ENCODE measurements at regions of chr19 and their contacts with region 1.

Region 1: DNA sequence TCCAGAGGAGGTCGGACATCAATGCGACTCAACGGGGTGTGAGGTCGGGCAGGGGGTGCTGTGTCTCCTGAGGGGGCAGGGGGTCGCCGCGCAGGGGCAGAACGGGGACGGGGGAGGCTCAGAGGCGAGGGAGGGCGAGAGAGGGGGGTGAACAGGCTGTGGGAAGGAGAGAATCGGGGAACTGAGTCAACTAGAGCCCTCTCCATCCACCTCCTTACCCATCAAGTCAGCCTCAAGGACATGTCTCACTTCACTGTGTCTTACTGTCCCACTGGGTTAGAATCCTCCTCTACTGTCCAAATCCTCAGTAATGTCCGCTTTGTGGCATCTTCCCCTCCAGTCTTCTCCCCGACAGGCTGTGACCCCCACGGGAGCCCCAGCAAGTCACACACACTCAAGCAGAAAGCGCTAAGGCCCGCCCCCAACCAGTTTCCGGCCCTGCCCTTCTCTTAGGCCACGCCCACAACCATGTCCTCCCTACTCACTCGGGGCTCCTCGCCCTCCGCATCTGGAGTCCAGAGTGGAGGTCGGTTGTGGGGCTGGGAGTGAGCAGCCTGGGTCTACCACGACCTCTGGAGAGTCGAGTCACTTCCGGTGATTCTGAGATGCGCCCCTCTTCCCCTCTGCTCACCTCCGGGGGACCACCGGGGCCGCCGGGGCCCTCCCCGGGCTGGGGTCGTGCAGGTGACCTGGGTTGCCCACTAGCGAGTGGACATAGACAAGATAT is 9.3 kb downstream of the PLEKHA4 start:
- DNase-seq: peak in 8 of 9 experiments; percentile 74 to 84 (median 82)
- ATAC-seq: peak; percentile 76
- H3K4me3 ChIP-seq: peak overlapping the region; percentile 49 to 55
- H3K4me3 Mint-ChIP-seq: peak overlapping the region; percentile 88
- H3K27ac ChIP-seq: no peak overlapping the region
- H3K27ac Mint-ChIP-seq: peak overlapping the region; percentile 87
- H3K4me1 ChIP-seq: no peaks in the 10 kb centered on the region
- H3K4me1 Mint-ChIP-seq: peaks cover 3% of the 10 kb centered on the region
- H3K27me3 ChIP-seq: no peaks in the 10 kb centered on the region
- H3K27me3 Mint-ChIP-seq: no peaks in the 10 kb centered on the region
- CTCF ChIP-seq: no peak

Region 2: DNA sequence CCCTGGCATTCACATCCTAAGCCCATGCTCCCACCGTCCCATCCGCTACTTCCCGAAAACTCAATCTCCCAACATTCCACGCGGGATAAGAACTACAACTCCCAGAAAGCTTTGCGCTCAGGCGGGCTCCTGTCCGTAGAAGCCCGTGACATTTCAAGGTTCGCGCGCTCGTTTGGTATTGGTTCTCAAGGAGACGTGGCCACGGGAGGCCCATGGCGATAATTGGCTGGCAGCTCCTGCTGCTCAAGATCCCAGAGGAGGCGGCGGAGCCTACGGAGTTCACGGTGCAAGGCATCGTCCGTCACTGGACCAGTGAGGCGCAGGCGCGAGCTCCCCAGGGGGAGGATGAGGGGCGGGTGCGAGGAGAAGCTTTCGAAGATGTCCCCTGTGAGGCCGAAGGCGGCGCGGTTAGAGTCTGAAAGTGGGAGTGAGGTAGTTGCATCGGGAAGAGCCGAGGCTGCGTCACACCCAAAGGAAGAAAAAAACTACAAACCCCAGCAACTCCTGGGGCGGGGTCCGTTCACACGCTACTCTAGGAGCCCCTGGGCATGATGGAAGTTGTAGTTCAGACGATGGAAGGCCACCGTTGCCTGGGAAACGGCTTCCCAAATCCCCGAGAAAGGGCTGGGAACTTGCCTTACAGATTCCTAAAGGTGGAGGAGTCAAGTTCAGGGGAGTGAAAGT is 138.4 kb before region 1 on chr19:
- CTCF ChIA-PET with region 1: no interaction called
- POLR2A ChIA-PET with region 1: no interaction called
- intact Hi-C with region 1: loop called in 1 of 2 experiments (anchors 2 kb)
- DNase-seq: peak; percentile 81 to 96 (median 90)
- ATAC-seq: peak; percentile 80
- H3K4me3 ChIP-seq: peak overlapping the region; percentile 65 to 69
- H3K4me3 Mint-ChIP-seq: peak overlapping the region; percentile 96
- H3K27ac ChIP-seq: peak overlapping the region; percentile 52 to 88
- H3K27ac Mint-ChIP-seq: peak overlapping the region; percentile 96
- H3K4me1 ChIP-seq: peaks cover 16% of the 10 kb centered on the region
- H3K4me1 Mint-ChIP-seq: peaks cover 24% of the 10 kb centered on the region
- H3K27me3 ChIP-seq: no peaks in the 10 kb centered on the region
- H3K27me3 Mint-ChIP-seq: no peaks in the 10 kb centered on the region
- CTCF ChIP-seq: no peak

Region 3: GRCh38 chr19:48812094-48812929 is 46.8 kb before region 1 on chr19:
- CTCF ChIA-PET with region 1: no interaction called
- POLR2A ChIA-PET with region 1: no interaction called
- intact Hi-C with region 1: loop called in 1 of 2 experiments (anchors 2 kb)
- DNase-seq: peak; percentile 22 to 77 (median 64)
- ATAC-seq: peak; percentile 65
- H3K4me3 ChIP-seq: peak overlapping the region; percentile 35 to 37
- H3K4me3 Mint-ChIP-seq: peak overlapping the region; percentile 80
- H3K27ac ChIP-seq: no peak overlapping the region
- H3K27ac Mint-ChIP-seq: no peak overlapping the region
- H3K4me1 ChIP-seq: peaks cover 11% of the 10 kb centered on the region
- H3K4me1 Mint-ChIP-seq: peaks cover 26% of the 10 kb centered on the region
- H3K27me3 ChIP-seq: no peaks in the 10 kb centered on the region
- H3K27me3 Mint-ChIP-seq: no peaks in the 10 kb centered on the region
- CTCF ChIP-seq: no peak

Region 4: GRCh38 chr19:48872182-48872883 is 13.2 kb after region 1 on chr19 and contains the start of gene PPP1R15A:
- CTCF ChIA-PET with region 1: no interaction called
- POLR2A ChIA-PET with region 1: interaction called, 3 read pairs
- intact Hi-C with region 1: loop called (anchors 1 kb)
- DNase-seq: peak; percentile 95 to 99 (median 98)
- ATAC-seq: peak; percentile 41
- H3K4me3 ChIP-seq: peak within 1 kb of the TSS; percentile 88 to 90
- H3K4me3 Mint-ChIP-seq: peak within 1 kb of the TSS; percentile 97
- H3K27ac ChIP-seq: peak within 1 kb of the TSS; percentile 98 to 99
- H3K27ac Mint-ChIP-seq: peak within 1 kb of the TSS; percentile 100
- H3K4me1 ChIP-seq: peaks cover 32% of the 10 kb centered on the region
- H3K4me1 Mint-ChIP-seq: peaks cover 34% of the 10 kb centered on the region
- H3K27me3 ChIP-seq: no peaks in the 10 kb centered on the region
- H3K27me3 Mint-ChIP-seq: no peaks in the 10 kb centered on the region
- CTCF ChIP-seq: no peak
- total RNA-seq, gene PPP1R15A: 398 to 399 TPM

Region 5: DNA sequence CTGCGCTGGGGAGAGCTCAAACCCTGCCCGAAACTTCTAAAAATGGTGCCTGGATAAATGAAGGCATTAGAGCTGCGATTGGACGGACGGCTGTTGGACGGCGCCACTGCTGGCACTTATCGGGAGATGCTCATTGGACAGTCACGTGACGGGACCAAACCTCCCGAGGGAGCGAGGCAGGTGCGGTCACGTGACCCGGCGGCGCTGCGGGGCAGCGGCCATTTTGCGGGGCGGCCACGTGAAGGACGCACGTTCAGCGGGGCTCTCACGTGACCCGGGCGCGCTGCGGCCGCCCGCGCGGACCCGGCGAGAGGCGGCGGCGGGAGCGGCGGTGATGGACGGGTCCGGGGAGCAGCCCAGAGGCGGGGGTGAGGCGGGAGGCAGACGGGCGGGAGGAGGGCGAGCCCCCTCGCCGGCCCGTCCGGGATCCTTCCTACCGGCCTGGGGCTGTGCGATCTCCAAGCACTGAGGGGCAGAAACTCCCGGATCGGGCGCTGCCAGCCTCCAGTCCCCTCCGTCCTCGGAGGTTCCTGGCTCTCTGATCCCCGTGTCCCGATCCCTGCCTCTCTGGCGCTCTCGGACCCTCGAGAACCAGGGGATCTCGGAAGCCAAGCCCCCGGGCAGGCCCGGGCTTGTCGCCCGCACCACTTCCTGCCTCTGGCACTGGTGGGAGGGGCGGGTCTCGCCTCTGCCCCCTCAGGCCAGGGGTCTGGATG is 95.6 kb after region 1 on chr19 and contains the start of gene BAX:
- CTCF ChIA-PET with region 1: no interaction called
- POLR2A ChIA-PET with region 1: no interaction called
- intact Hi-C with region 1: loop called in 1 of 2 experiments (anchors 2 kb)
- DNase-seq: peak; percentile 61 to 91 (median 81)
- ATAC-seq: peak; percentile 86
- H3K4me3 ChIP-seq: peak within 1 kb of the TSS; percentile 60 to 98
- H3K4me3 Mint-ChIP-seq: peak within 1 kb of the TSS; percentile 91
- H3K27ac ChIP-seq: peak within 1 kb of the TSS; percentile 69 to 93
- H3K27ac Mint-ChIP-seq: peak within 1 kb of the TSS; percentile 85
- H3K4me1 ChIP-seq: peaks cover 19% of the 10 kb centered on the region
- H3K4me1 Mint-ChIP-seq: peaks cover 29% of the 10 kb centered on the region
- H3K27me3 ChIP-seq: no peaks in the 10 kb centered on the region
- H3K27me3 Mint-ChIP-seq: no peaks in the 10 kb centered on the region
- CTCF ChIP-seq: no peak
- total RNA-seq, gene BAX: 55.7 to 57.4 TPM